ENCODE measurements at regions of chr20 and their contacts with region 1.

Region 1: GRCh38 chr20:49610701-49611538 is 43.0 kb upstream of the PTGIS start:
- DNase-seq: peak; percentile 98
- H3K4me3 Mint-ChIP-seq: peak overlapping the region; percentile 67
- H3K27ac Mint-ChIP-seq: peak overlapping the region; percentile 67
- H3K4me1 Mint-ChIP-seq: peaks cover 58% of the 10 kb centered on the region
- H3K27me3 Mint-ChIP-seq: peaks cover 11% of the 10 kb centered on the region
- CTCF ChIP-seq: peak; percentile 100

Region 2: GRCh38 chr20:49541733-49542513 is 69.0 kb before region 1 on chr20:
- CTCF ChIA-PET with region 1: interaction called, 184 read pairs
- intact Hi-C with region 1: loop called (anchors 1 kb)
- DNase-seq: peak; percentile 83
- H3K4me3 Mint-ChIP-seq: no peak overlapping the region
- H3K27ac Mint-ChIP-seq: no peak overlapping the region
- H3K4me1 Mint-ChIP-seq: peaks cover 25% of the 10 kb centered on the region
- H3K27me3 Mint-ChIP-seq: peaks cover 15% of the 10 kb centered on the region
- CTCF ChIP-seq: peak; percentile 98

Region 3: GRCh38 chr20:49627329-49627761 is 16.4 kb after region 1 on chr20:
- CTCF ChIA-PET with region 1: no interaction called
- intact Hi-C with region 1: no loop called
- DNase-seq: peak; percentile 45
- H3K4me3 Mint-ChIP-seq: no peak overlapping the region
- H3K27ac Mint-ChIP-seq: no peak overlapping the region
- H3K4me1 Mint-ChIP-seq: peaks cover 30% of the 10 kb centered on the region
- H3K27me3 Mint-ChIP-seq: peaks cover under 1% of the 10 kb centered on the region
- CTCF ChIP-seq: no peak

Region 4: DNA sequence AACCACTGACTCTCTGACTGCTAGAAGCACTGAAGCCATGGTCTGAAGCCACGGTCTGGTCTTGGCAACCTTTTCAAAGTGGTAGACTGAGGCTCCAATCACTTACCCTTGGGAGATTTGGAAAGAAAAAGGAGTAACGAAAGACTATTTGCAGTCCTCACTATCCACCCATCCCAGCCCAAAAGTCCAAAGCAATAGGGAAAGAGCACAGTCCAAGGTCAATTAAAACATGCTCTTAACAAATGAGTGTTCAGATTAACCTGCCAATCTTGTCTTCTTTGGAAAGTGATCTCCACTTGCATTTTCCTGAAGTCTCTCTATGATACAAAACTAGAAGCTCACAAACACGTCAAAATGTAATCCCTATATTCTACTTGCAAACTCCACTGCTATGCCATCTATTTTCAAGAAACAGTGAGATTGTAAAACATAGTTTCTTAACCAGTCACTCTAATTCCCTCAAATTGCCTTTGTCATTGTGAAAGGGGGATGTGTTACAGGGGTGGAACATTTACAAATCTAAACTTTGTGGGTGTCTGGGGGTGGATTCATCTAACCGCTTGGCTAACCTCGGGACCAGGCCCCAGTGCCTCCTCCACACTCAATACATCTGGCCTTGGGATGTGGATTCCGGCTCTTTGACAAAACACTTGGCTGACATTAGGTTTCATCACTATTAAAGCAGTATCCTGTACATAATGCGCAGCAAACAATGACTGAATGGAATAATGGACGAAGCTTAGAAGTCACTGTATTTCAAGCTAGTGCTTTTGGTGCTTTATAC is 46.4 kb after region 1 on chr20:
- CTCF ChIA-PET with region 1: no interaction called
- intact Hi-C with region 1: no loop called
- DNase-seq: no peak
- H3K4me3 Mint-ChIP-seq: no peak overlapping the region
- H3K27ac Mint-ChIP-seq: no peak overlapping the region
- H3K4me1 Mint-ChIP-seq: peaks cover 8% of the 10 kb centered on the region
- H3K27me3 Mint-ChIP-seq: no peaks in the 10 kb centered on the region
- CTCF ChIP-seq: no peak

Region 5: GRCh38 chr20:49676581-49677291 is 65.8 kb after region 1 on chr20:
- CTCF ChIA-PET with region 1: interaction called, 7 read pairs
- intact Hi-C with region 1: loop called (anchors 5 kb)
- DNase-seq: no peak
- H3K4me3 Mint-ChIP-seq: no peak overlapping the region
- H3K27ac Mint-ChIP-seq: peak overlapping the region; percentile 57
- H3K4me1 Mint-ChIP-seq: peaks cover 98% of the 10 kb centered on the region
- H3K27me3 Mint-ChIP-seq: no peaks in the 10 kb centered on the region
- CTCF ChIP-seq: no peak

Region 6: DNA sequence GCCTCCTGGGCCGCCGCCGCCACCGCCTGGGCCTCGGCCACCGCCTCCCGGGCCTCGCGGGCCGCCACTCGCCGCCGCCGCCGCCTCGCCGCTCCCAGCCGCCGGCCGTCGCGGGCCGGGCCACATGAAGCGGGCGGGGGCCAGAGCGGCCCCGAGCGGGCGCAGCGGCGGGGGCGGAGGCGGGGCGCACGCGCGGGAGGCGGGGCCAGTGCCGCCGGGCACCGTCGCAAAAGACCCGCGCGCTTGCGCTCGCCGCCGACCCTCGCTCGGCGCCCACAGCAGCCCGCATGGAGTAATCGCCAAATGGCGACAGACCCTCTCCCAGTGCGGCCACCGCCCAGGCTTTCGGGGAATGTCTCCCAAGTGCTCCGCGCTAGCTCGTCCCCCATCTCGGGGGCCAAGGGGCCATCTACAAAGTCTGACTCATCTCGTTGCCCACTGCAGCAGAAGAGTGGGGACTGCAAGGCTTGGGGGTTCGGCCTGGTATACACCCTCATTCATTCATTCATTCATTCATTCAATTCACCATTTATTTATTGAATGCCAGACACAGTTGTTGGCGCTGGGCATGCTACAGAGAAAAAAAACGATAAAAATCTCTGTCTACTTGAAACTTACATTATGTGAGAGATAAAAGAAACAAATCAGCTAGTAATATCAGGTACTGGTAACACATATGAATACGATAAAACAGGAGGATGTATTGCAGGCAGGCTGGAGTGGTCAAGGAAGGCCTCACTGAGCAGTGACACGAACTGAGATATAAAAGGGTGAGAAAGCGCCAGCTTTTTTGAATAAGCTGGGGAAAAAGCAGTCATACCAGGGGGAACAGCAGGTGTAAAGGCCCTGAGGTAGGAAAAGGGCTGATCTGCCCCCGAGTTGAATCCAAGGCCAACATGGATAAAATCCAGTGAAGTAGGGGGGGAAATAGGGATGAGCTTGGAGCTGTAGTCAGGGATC is 103.1 kb after region 1 on chr20 and contains the start of gene B4GALT5:
- CTCF ChIA-PET with region 1: no interaction called
- intact Hi-C with region 1: loop called (anchors 5 kb)
- DNase-seq: peak; percentile 87
- H3K4me3 Mint-ChIP-seq: peak within 1 kb of the TSS; percentile 92
- H3K27ac Mint-ChIP-seq: peak within 1 kb of the TSS; percentile 89
- H3K4me1 Mint-ChIP-seq: peaks cover 47% of the 10 kb centered on the region
- H3K27me3 Mint-ChIP-seq: no peaks in the 10 kb centered on the region
- CTCF ChIP-seq: no peak
- total RNA-seq, gene B4GALT5: 117 and 131 TPM in 2 replicates

Region 7: GRCh38 chr20:49888345-49888966 is 277.5 kb after region 1 on chr20:
- CTCF ChIA-PET with region 1: interaction called, 16 read pairs
- intact Hi-C with region 1: loop called (anchors 1 kb)
- DNase-seq: peak; percentile 72
- H3K4me3 Mint-ChIP-seq: no peak overlapping the region
- H3K27ac Mint-ChIP-seq: peak overlapping the region; percentile 46
- H3K4me1 Mint-ChIP-seq: peaks cover 34% of the 10 kb centered on the region
- H3K27me3 Mint-ChIP-seq: no peaks in the 10 kb centered on the region
- CTCF ChIP-seq: peak; percentile 93

Measured in Calu3 (cell line).